PC-9 (cell line): ENCODE measurements at regions of chr9 and their contacts with region 1.

Region 1: DNA sequence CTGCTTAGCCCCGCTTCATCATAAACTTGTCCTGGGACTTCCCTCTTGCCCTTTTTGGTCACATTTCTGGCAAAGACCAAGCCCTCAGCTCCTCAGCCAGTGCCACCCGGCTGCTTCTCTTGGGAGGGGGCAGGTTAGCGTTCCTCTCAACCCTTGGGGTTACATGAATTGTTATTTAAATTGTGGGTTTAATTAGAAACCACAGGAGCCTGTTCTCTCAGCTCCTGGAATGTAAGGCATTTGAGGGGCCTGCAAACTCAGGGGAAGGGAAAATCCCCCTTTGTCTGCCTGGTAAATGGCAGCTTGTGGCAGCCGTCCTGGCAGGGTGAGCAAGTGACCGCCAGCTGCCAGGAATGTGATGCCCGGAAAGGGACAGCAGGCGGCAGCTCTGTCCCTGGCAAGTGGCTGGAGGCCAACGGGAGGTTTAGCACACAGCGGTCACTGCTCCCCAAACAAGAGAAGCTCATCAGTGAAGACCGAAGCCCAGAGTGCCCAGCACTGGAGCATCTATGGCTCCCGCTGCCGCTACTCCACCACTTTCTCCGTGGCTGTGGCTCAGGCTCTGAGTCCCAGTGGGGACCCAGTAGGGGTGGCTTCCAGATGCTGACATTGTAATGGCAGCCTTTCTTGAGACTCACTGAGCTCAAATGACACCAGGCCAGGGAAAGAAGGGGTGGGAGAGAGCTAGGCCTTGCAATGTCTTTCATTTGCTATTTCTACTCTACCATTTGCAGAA is 51.7 kb downstream of the SHB start:
- DNase-seq: peak; percentile 51 to 80
- H3K4me3 ChIP-seq: no peak overlapping the region
- H3K27ac ChIP-seq: peak overlapping the region; percentile 85
- H3K4me1 ChIP-seq: peaks cover 64% of the 10 kb centered on the region
- H3K27me3 ChIP-seq: no peaks in the 10 kb centered on the region
- CTCF ChIP-seq: peak; percentile 39

Region 2: DNA sequence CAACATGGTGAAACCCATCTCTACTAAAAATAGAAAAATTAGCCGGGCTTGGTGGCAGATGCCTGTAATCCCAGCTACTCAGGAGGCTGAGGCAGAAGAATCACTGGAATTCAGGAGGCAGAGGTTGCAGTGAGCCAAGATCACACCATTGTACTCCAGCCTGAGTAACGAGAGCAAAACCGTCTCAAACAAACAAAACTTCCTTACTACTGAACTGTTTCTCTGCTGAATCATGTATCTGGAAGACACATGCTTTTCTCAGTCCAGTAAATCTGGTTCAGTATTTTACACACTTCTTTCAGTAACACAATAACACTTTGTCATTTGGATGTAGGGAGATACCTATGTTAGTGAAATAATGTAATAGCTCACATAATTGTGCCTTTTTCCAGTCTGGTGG is 255.8 kb before region 1 on chr9:
- CTCF ChIA-PET with region 1: no interaction called
- POLR2A ChIA-PET with region 1: no interaction called
- intact Hi-C with region 1: no loop called
- DNase-seq: no peak
- H3K4me3 ChIP-seq: no peak overlapping the region
- H3K27ac ChIP-seq: no peak overlapping the region
- H3K4me1 ChIP-seq: no peaks in the 10 kb centered on the region
- H3K27me3 ChIP-seq: no peaks in the 10 kb centered on the region
- CTCF ChIP-seq: no peak

Region 3: DNA sequence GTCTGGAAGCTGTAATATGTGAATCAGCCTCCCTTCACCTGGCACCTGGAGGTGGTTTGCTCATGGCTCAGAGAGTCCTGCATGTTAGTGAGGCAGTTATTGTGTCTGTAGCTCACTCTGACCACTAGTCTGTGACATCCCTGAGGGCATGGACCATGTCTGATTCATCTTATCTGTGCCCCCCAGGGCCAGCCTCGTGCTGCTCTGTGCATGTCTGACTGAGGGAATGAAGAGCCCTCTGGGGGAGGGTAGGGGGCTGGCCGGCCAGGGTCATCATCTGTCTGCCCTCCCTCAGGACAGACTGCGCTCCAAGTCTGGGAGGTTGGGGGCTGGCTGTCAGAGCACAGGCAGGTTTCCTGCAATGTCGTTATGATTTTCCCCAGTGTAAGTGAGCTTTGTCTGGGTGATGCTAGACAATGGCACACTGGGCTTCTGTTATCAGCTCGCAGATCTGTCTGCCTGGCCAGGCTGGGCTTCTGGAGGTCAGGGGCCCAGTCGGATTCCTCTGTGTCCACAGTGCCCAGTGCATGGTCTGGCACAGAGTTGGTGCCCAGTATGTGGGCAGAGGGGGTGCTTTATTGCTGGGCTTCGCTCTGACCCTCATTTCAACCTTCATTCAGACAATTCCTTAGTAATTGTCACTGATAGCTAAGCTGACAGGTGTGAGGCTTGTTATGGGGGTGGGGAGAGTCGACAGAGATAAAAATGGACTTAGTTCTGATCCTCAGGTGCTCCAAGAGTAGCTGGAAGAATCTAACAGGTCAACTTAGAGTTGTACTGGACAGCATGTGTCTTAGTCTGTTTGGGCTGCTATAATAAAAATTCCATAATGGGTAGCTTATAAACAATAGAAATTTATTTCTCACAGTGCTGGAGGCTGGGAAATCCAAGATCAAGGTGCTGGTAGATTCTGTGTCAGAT is 137.4 kb after region 1 on chr9:
- CTCF ChIA-PET with region 1: no interaction called
- POLR2A ChIA-PET with region 1: no interaction called
- intact Hi-C with region 1: loop called (anchors 5 kb)
- DNase-seq: no peak
- H3K4me3 ChIP-seq: no peak overlapping the region
- H3K27ac ChIP-seq: no peak overlapping the region
- H3K4me1 ChIP-seq: no peaks in the 10 kb centered on the region
- H3K27me3 ChIP-seq: no peaks in the 10 kb centered on the region
- CTCF ChIP-seq: no peak